Mammary epithelial cell (primary cell): ENCODE measurements at regions of chr1 and their contacts with region 1.

Region 1: DNA sequence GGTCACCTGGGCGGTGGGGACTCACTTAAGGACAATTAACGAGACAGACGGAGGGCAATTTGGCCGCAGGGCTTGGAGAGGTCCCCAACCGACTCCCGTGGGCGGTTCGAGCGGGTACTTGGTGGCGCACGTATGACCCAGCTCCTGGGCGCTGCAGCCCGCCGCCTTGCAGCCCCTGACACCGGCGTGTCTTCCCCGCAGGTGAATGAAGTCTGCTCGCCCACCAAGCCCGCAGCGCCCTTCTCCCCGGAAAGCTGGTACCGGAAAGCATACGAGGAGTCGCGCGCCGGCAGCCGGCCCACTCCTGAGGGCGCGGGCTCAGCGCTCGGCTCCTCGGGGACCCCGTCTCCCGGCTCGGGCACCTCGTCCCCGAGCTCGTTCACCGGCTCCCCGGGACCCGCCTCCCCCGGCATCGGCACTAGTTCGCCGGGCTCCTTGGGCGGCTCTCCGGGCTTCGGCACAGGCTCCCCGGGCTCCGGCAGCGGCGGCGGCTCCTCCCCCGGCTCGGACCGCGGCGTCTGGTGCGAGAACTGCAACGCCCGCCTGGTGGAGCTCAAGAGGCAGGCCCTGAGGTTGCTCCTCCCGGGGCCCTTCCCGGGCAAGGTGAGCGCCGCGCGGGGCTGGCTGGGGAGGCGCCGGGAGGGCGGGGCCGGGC is 1.4 kb downstream of the KIF26B start:
- DNase-seq: peak; percentile 82
- H3K4me3 ChIP-seq: peak overlapping the region; percentile 47 to 80 (median 73)
- H3K27ac ChIP-seq: no peak overlapping the region
- H3K4me1 ChIP-seq: peaks cover 26% of the 10 kb centered on the region
- H3K27me3 ChIP-seq: no peaks in the 10 kb centered on the region
- CTCF ChIP-seq: peak; percentile 52 to 79

Region 2: DNA sequence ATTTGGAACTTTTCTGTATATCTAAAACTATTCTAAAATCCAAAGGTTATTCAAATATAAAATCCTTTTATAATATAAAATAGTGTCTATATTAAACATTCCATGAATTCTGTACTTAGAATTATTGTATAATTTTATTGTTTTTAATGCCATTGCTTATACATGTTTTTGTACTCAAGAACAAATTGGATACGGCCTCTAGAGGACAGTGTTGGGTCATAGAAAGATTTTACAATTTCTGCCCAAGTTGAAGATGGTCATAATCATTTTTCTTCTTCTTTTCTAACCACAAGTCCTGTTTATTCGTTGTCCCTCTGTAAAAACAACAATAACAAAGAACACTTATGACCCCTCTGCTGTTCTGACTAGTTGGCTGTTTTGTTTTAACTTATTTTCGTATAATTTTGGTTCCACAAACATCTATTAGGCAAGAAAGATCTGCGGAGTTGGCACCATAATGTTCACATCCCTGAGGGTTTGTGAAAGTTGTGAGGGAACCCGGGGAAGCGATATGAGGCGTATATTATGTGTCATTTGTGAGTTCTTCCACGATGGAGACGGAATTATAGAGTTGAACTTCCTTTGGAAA is 77.1 kb before region 1 on chr1:
- CTCF ChIA-PET with region 1: no interaction called
- dilution Hi-C with region 1: no loop called
- in situ Hi-C with region 1: no loop called
- intact Hi-C with region 1: loop called (anchors 1 kb)
- DNase-seq: peak; percentile 26
- H3K4me3 ChIP-seq: no peak overlapping the region
- H3K27ac ChIP-seq: no peak overlapping the region
- H3K4me1 ChIP-seq: no peaks in the 10 kb centered on the region
- H3K27me3 ChIP-seq: no peaks in the 10 kb centered on the region
- CTCF ChIP-seq: peak; percentile 81 to 90

Region 3: GRCh38 chr1:245788269-245788668 is 632.1 kb after region 1 on chr1:
- CTCF ChIA-PET with region 1: interaction called, 4 read pairs
- dilution Hi-C with region 1: no loop called
- in situ Hi-C with region 1: no loop called
- intact Hi-C with region 1: loop called (anchors 5 kb)
- DNase-seq: peak; percentile 92
- H3K4me3 ChIP-seq: no peak overlapping the region
- H3K27ac ChIP-seq: no peak overlapping the region
- H3K4me1 ChIP-seq: peaks cover 10% of the 10 kb centered on the region
- H3K27me3 ChIP-seq: no peaks in the 10 kb centered on the region
- CTCF ChIP-seq: no peak

Region 4: DNA sequence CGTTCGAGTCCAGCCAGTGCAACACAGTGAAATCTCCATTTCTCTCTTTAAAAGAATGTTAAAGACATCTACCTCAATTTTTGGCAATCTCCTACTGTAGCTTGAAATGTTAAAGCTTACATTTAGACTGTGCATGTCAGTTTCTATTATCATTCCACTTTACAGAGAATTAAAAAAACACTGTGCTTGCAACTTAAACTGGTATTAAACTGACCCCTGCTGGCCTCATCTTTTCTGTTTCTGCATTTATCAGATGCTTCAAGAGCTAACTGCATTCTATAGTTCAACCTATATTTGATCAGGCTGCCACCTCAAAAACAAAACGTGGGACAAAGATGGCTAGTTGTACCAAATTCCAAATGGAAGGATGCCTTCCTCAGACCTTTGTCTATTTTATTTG is 1124.3 kb after region 1 on chr1:
- CTCF ChIA-PET with region 1: interaction called, 4 read pairs
- dilution Hi-C with region 1: no loop called
- in situ Hi-C with region 1: loop called in 1 of 2 experiments (anchors 25 kb)
- intact Hi-C with region 1: loop called (anchors 1 kb)
- DNase-seq: no peak
- H3K4me3 ChIP-seq: no peak overlapping the region
- H3K27ac ChIP-seq: no peak overlapping the region
- H3K4me1 ChIP-seq: no peaks in the 10 kb centered on the region
- H3K27me3 ChIP-seq: no peaks in the 10 kb centered on the region
- CTCF ChIP-seq: peak in 1 of 2 donors; percentile 40

Region 5: GRCh38 chr1:246482805-246483568 is 1326.8 kb after region 1 on chr1:
- CTCF ChIA-PET with region 1: no interaction called
- dilution Hi-C with region 1: no loop called
- in situ Hi-C with region 1: loop called in 1 of 2 experiments (anchors 10 kb)
- intact Hi-C with region 1: no loop called
- DNase-seq: no peak
- H3K4me3 ChIP-seq: no peak overlapping the region
- H3K27ac ChIP-seq: no peak overlapping the region
- H3K4me1 ChIP-seq: no peaks in the 10 kb centered on the region
- H3K27me3 ChIP-seq: no peaks in the 10 kb centered on the region
- CTCF ChIP-seq: no peak

Region 6: GRCh38 chr1:246724016-246724730 is 1568.0 kb after region 1 on chr1 and contains the start of gene SCCPDH:
- CTCF ChIA-PET with region 1: no interaction called
- dilution Hi-C with region 1: no loop called
- in situ Hi-C with region 1: loop called in 1 of 2 experiments (anchors 25 kb)
- intact Hi-C with region 1: no loop called
- DNase-seq: peak; percentile 47
- H3K4me3 ChIP-seq: peak within 1 kb of the TSS; percentile 60 to 69 (median 62)
- H3K27ac ChIP-seq: no peak within 1 kb of the TSS
- H3K4me1 ChIP-seq: peaks cover 3% of the 10 kb centered on the region
- H3K27me3 ChIP-seq: no peaks in the 10 kb centered on the region
- CTCF ChIP-seq: no peak
- total RNA-seq, gene SCCPDH: 1.6 to 9.7 TPM